ENCODE measurements at regions of chr11 and their contacts with region 1.

Region 1: DNA sequence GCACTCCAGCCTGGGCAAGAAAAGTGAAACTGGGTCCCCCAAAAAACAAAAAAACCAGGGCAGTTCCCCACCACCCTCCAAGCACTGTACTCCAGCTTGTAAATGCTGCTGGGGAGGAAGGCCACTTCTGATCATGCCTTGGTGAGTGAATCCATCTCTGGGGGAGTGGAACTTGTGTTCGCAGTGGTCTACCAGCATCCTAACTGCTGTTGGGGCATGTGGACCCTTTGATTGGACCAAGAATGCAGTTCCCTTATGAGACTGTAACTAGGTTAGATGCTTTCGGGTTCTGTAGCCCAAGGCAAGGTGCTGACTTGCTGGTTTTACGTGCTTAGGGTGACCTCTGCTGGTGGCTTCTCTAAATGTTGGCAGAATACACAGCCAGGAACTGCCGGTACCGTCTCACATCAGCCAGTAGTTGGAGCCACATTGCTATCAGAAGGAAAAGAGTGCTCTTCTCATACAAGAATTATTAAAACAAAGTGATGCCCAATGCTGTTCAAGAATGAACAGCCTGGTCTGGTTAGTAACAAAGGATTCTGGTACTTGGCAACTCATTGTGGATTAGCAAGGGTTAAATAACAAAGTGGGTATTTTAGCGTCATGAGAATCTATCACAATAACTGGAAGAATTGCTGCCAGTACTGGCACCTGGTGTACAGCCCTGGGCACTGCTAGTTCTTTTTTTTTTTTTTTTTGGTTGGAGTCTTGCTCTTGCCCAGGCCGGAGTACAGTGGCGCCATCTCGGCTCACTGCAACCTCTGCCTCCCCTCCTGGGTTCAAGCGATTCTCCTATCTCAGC is 13.0 kb downstream of the EIF1AD start:
- DNase-seq: peak; percentile 61 to 97
- H3K4me3 ChIP-seq: no peak overlapping the region
- H3K27ac ChIP-seq: peak overlapping the region; percentile 15 to 60
- H3K4me1 ChIP-seq: no peaks in the 10 kb centered on the region
- H3K27me3 ChIP-seq: no peaks in the 10 kb centered on the region
- CTCF ChIP-seq: peak; percentile 95 to 98 (median 98)

Region 2: DNA sequence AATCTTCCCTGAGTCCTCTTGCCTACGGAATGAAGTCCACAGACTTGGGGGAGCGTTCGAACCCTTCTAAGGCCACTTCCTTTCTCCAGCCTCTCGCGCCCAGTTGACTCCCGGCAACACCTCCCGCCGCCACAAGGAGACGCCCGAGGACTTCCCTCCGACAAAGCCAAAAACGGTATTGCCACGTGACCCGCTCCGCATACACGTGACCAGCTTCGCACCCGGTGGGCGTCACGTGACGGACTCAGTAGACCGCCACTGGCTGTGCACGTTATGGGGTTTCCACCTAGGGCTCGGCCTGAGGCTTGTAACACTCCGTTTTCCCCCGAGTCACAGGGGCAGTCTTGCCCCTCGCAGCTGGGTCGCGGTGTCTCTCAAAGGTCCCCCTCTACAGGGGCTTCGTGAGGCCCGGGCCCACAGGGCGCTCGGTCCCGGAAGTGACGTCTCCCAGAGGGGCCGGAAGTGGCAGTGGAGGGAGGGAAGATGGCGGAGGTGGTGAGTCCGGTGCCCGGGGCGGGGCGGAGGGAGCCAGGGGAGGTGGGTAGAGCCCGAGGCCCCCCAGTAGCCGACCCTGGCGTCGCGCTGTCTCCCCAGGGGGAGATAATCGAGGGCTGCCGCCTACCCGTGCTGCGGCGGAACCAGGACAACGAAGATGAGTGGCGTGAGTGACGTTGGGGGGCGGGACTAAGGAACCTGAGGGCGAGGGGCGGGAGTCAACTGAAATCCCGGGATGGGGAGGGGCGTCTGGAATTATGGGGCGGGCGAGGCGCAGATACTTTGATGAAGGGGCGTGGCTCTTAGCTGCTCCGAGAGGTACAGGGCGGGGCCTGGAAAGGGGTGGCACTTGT is 277.0 kb before region 1 on chr11 and contains the start of gene KAT5:
- intact Hi-C with region 1: loop called (anchors 2 kb)
- DNase-seq: peak; percentile 96 to 99
- H3K4me3 ChIP-seq: peak within 1 kb of the TSS; percentile 72 to 94
- H3K27ac ChIP-seq: peak within 1 kb of the TSS; percentile 96 to 100
- H3K4me1 ChIP-seq: peaks cover 4 to 19% of the 10 kb centered on the region in 2 donors
- H3K27me3 ChIP-seq: no peaks in the 10 kb centered on the region
- CTCF ChIP-seq: peak; percentile 95 to 99 (median 98)
- total RNA-seq, gene KAT5: 31.0 TPM

Region 3: DNA sequence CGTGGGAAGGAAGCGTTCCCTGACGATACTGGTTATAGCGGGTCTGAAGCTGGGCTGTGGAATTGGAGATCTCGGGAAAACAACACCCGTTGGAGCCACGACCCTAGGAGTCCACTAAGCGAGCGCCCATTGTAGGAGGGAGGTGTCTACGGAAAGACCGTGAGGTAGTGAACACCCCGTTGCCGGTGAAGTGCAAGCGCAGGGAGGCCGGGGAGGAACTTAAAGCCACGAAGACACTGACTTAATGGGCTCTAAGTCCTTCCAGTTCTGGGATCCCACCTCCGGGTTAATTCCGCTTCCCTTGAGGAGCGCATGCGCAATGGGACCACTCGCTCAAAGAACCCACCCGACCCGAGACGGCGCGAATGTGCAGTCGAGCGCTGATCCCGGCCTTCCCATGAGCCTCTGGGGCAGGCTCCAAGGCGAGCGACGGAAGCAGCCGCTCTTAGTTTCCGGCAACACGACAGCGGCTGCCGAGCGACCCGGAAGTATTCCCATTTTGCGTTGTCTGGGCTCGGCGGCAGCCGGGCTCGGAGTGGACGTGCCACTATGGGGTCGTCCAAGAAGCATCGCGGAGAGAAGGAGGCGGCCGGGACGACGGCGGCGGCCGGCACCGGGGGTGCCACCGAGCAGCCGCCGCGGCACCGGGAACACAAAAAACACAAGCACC is 27.6 kb before region 1 on chr11 and contains the start of gene SART1:
- intact Hi-C with region 1: loop called (anchors 1 kb)
- DNase-seq: peak; percentile 86 to 99
- H3K4me3 ChIP-seq: peak within 1 kb of the TSS; percentile 89 to 100
- H3K27ac ChIP-seq: peak within 1 kb of the TSS; percentile 86 to 96
- H3K4me1 ChIP-seq: peaks cover 15 to 23% of the 10 kb centered on the region in 2 donors
- H3K27me3 ChIP-seq: no peaks in the 10 kb centered on the region
- CTCF ChIP-seq: peak in 1 of 3 experiments; percentile 13
- total RNA-seq, gene SART1: 28.4 TPM

Region 4: GRCh38 chr11:66002648-66003225 is 13.7 kb after region 1 on chr11:
- intact Hi-C with region 1: no loop called
- DNase-seq: no peak
- H3K4me3 ChIP-seq: peak overlapping the region; percentile 89 to 98
- H3K27ac ChIP-seq: peak overlapping the region; percentile 86 to 93
- H3K4me1 ChIP-seq: peaks cover 3 to 27% of the 10 kb centered on the region in 2 donors
- H3K27me3 ChIP-seq: no peaks in the 10 kb centered on the region
- CTCF ChIP-seq: peak; percentile 6 to 28 (median 28)

Region 5: GRCh38 chr11:66022401-66023185 is 33.6 kb after region 1 on chr11:
- intact Hi-C with region 1: loop called (anchors 1 kb)
- DNase-seq: peak in 1 of 2 donors; percentile 88
- H3K4me3 ChIP-seq: peak overlapping the region; percentile 27 to 58
- H3K27ac ChIP-seq: peak overlapping the region; percentile 75 to 79
- H3K4me1 ChIP-seq: peaks cover 15 to 25% of the 10 kb centered on the region in 2 donors
- H3K27me3 ChIP-seq: no peaks in the 10 kb centered on the region
- CTCF ChIP-seq: peak; percentile 95 to 99 (median 99)